Adrenal gland (tissue), 19 donors: ENCODE measurements at regions of chr9 and their contacts with region 1.

Region 1: DNA sequence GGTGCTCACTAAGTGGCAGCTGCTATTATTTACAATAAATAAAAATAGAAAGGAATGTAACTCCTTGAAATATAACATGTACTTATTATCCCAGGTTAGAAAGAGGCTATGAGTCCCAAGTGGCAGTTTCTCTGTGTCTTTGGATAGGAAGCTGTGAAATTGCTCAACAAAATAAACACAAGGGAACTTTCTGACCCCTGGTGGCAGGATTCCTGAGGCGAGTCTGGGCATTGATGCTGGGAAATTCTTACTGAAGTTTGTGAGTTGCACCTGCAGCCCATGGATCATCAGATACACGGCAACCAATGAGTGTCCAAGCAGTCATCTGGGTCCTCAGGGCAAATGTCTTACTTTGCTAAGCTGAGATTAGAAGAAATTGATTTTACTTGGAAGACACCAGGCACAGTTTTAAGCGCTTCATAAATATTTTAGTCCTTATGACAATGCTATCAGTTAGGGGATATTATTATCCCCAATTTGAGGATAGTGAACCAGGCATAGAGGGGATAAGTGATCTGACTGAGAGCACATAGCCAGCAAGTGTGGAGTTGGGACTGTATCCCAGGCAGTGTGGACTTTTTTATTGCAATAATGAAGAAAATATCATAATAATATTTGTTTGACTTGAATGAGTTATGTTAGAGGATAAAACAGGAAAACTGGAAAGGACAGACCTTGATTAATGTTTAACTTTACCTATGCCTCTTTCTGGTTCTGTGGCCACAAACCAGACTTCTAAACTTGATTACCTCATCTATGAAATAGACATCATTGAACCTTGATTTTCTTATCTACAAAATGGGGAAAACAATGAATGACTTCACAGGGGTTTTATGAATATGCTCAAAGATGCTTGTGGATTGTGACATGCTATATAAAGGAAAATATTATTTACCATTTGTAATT is 265.5 kb upstream of the ADAMTSL1 start:
- DNase-seq: peak; percentile 17 to 67 (median 34)
- H3K4me3 ChIP-seq: no peak overlapping the region
- H3K27ac ChIP-seq: no peak overlapping the region
- H3K4me1 ChIP-seq: no peaks in the 10 kb centered on the region
- H3K27me3 ChIP-seq: no peaks in the 10 kb centered on the region
- CTCF ChIP-seq: peak; percentile 11 to 53 (median 40)
- POLR2A ChIP-seq: no peak

Region 2: DNA sequence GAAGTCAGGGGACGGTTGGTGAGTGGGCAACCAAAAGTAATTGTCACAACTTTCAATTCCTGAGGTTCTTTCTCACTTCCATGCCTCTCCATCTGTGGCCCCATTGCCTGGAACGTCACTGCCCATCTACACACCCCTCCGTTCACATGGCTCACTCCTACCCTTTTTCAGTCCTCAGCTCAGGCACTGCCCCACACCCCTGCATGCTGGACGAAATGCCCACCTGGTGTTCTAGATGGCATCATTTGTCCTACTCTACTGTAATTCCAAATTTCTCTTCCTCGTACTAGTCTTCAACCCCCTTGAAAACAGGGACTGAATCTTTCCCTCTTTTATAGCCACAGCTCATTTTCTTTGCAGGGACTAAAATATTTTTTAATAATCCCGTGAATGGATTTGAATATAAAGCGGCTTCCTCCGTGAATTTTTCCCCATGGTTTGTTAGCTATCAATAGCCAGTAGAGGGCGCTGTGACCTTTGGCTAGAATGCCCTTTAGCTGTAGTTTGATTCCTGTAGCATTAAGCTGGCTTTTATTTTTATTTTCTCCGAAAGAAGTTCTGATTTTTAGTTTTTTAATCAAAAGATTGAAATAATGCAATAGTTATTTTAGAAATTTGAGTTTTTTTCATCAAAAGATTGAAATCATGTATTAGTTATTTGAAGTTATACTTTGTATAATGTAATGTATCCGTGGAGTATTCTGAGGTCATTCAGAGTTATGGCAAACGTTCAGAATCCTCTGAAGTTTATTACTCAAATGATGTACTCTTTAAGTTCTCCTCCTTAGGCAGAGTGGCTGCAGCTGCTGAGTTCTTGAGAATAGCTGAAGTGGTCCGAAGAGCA is 397.5 kb before region 1 on chr9:
- intact Hi-C with region 1: loop called (anchors 5 kb)
- DNase-seq: peak; percentile 45 to 76 (median 55)
- H3K4me3 ChIP-seq: no peak overlapping the region
- H3K27ac ChIP-seq: no peak overlapping the region
- H3K4me1 ChIP-seq: no peaks in the 10 kb centered on the region
- H3K27me3 ChIP-seq: peaks cover 8% of the 10 kb centered on the region
- CTCF ChIP-seq: peak; percentile 64 to 91 (median 80)
- POLR2A ChIP-seq: no peak

Region 3: GRCh38 chr9:18281291-18281690 is 72.9 kb after region 1 on chr9:
- intact Hi-C with region 1: no loop called
- DNase-seq: no peak
- H3K4me3 ChIP-seq: no peak overlapping the region
- H3K27ac ChIP-seq: no peak overlapping the region
- H3K4me1 ChIP-seq: no peaks in the 10 kb centered on the region
- H3K27me3 ChIP-seq: no peaks in the 10 kb centered on the region
- CTCF ChIP-seq: no peak
- POLR2A ChIP-seq: no peak